GM18951 (cell line): ENCODE measurements at regions of chr10 and their contacts with region 1.

Region 1: GRCh38 chr10:11667756-11668155 is 56.3 kb upstream of the USP6NL start:
- POLR2A ChIP-seq: no peak

Region 2: DNA sequence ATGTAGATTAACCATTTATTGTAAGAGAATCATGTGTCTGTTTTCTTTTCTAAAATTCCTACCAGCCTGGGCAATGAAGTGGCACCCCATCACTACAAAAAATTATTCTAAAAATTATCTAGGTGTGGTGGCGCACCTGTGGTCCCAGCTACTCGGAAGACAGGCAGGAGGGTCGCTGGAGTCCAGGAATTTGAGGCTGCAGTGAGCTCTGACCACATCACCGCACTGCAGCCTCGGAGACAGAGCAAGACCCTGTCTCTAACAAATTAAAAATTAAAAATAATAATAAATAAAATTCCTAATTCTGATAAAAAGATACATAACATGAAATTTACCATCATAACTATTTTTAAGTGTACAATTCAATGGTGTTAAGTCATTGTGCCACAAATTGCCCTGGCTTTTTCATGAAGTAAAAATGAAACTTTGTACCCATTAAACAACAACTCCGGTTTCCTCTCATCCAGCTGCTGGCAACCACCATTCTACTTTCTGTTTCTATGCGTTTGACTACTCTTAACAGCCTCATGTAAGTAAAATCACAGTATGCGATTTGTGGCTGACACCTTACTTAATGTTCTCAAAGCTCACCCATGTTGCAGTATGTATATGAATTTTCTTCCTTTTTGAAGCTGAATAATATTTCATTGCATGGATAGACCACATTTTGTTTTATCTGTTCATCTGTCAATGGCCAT is 35.7 kb before region 1 on chr10:
- in situ Hi-C with region 1: loop called (anchors 5 kb)
- POLR2A ChIP-seq: no peak

Region 3: DNA sequence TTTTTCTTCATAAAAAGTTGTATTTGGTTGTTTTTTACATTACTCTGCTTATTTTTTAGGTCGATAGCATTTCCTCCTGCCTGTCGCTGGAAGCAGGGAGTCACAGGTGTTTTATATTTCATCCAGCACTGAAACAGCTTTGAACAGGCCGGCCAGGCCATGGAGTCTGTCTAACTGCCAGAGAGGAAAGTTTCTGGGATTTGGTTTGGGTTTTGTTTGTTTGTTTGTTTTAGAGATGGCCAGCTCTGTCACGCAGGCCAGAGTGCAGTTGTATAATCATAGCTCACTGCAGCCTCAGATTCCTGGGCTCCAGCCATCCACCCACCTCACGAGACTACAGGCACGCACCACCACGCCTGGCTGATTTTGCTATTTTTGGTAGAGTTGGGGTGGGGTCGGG is 178.8 kb after region 1 on chr10:
- in situ Hi-C with region 1: no loop called
- POLR2A ChIP-seq: no peak

Region 4: DNA sequence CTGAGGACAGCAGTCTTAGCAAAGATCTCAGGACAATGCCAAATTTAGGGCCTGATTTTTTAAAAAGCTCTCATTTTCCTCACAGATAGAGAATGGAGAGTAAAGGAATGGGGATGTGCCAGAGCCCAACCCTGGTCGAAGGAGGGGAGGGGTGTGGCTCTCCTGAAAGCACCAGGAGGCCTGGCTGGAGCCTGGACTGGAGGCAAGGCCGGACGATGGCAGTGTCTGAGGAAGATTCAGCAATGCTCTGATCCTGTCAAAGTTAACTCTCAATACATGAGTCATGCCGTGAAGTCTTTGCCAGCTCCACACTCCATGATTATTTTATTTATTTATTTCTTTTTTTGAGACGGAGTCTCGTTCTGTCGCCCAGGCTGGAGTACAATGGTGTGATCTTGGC is 266.5 kb after region 1 on chr10:
- in situ Hi-C with region 1: no loop called
- POLR2A ChIP-seq: no peak